Esophagus muscularis mucosa (tissue), 4 donors: ENCODE measurements at regions of chr15 and their contacts with region 1.

Region 1: GRCh38 chr15:98177924-98178592 is 217.6 kb downstream of the ARRDC4 start:
- DNase-seq: no peak
- H3K4me3 ChIP-seq: no peak overlapping the region
- H3K27ac ChIP-seq: no peak overlapping the region
- H3K4me1 ChIP-seq: peaks cover 0 to 5% (median 2%) of the 10 kb centered on the region in 4 donors
- H3K27me3 ChIP-seq: peaks cover 0 to 19% (median 0%) of the 10 kb centered on the region in 4 donors
- CTCF ChIP-seq: peak; percentile 62 to 78 (median 77)
- EP300 ChIP-seq: no peak
- POLR2A ChIP-seq: no peak

Region 2: DNA sequence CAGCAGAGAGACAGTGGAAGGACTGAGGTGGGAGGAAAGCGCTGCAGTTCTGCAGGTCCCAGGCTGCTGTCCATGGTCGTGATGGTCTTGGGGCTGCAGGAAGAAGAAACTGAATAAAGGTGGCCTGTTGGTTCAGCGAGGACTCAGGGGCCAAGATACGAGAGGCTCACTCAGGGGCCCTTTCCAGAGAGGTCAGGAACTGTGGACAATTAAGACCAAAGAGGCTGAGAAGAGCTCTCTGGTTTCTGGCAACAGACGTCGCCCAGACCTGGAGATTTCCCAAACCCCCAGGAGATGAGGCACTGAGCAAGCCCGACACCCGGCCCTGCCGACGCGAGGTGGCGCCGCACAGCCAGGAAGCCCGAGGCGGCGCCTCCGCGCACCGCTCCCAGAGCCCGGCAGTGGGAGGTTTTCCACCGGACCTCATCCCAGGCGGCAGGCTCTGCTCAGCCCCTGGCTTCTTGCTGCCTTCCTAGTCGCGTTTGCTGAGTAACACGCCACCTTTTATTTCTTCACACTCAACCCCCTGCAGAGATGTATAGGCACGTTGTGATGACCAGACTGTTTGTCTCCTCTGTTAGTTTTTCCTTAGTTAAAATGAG is 274.0 kb before region 1 on chr15:
- intact Hi-C with region 1: loop called (anchors 1 kb)
- DNase-seq: no peak
- H3K4me3 ChIP-seq: peak overlapping the region in 1 of 4 donors; percentile 22
- H3K27ac ChIP-seq: no peak overlapping the region
- H3K4me1 ChIP-seq: peaks cover 0 to 24% (median 23%) of the 10 kb centered on the region in 4 donors
- H3K27me3 ChIP-seq: no peaks in the 10 kb centered on the region
- CTCF ChIP-seq: peak; percentile 68 to 84 (median 78)
- EP300 ChIP-seq: no peak
- POLR2A ChIP-seq: no peak